ENCODE measurements at regions of chr16 and their contacts with region 1.

Region 1: GRCh38 chr16:79316004-79316458 is 284.5 kb downstream of the MAF start:
- DNase-seq: peak; percentile 85
- ATAC-seq: peak; percentile 89
- H3K4me3 Mint-ChIP-seq: no peak overlapping the region
- H3K27ac Mint-ChIP-seq: peak overlapping the region; percentile 88
- H3K4me1 Mint-ChIP-seq: peaks cover 28% of the 10 kb centered on the region
- H3K27me3 Mint-ChIP-seq: peaks cover 15% of the 10 kb centered on the region

Region 2: GRCh38 chr16:78778101-78779004 is 537.7 kb before region 1 on chr16:
- CTCF ChIA-PET with region 1: no interaction called
- POLR2A ChIA-PET with region 1: interaction called, 3 read pairs
- intact Hi-C with region 1: loop called (anchors 1 to 10 kb)
- DNase-seq: peak; percentile 77
- ATAC-seq: peak; percentile 66
- H3K4me3 Mint-ChIP-seq: peak overlapping the region; percentile 41
- H3K27ac Mint-ChIP-seq: peak overlapping the region; percentile 94
- H3K4me1 Mint-ChIP-seq: peaks cover 70% of the 10 kb centered on the region
- H3K27me3 Mint-ChIP-seq: no peaks in the 10 kb centered on the region

Region 3: GRCh38 chr16:78962457-78962929 is 353.5 kb before region 1 on chr16:
- CTCF ChIA-PET with region 1: no interaction called
- POLR2A ChIA-PET with region 1: no interaction called
- intact Hi-C with region 1: loop called in 1 of 2 experiments (anchors 1 kb)
- DNase-seq: no peak
- ATAC-seq: peak; percentile 86
- H3K4me3 Mint-ChIP-seq: no peak overlapping the region
- H3K27ac Mint-ChIP-seq: peak overlapping the region; percentile 86
- H3K4me1 Mint-ChIP-seq: peaks cover 23% of the 10 kb centered on the region
- H3K27me3 Mint-ChIP-seq: no peaks in the 10 kb centered on the region

Region 4: GRCh38 chr16:79217375-79218011 is 98.5 kb before region 1 on chr16:
- CTCF ChIA-PET with region 1: no interaction called
- POLR2A ChIA-PET with region 1: no interaction called
- intact Hi-C with region 1: loop called in 1 of 2 experiments (anchors 5 kb)
- DNase-seq: peak; percentile 46
- ATAC-seq: peak; percentile 82
- H3K4me3 Mint-ChIP-seq: no peak overlapping the region
- H3K27ac Mint-ChIP-seq: peak overlapping the region; percentile 34
- H3K4me1 Mint-ChIP-seq: peaks cover 13% of the 10 kb centered on the region
- H3K27me3 Mint-ChIP-seq: peaks cover 5% of the 10 kb centered on the region

Region 5: GRCh38 chr16:79451196-79451816 is 135.3 kb after region 1 on chr16:
- CTCF ChIA-PET with region 1: no interaction called
- POLR2A ChIA-PET with region 1: no interaction called
- intact Hi-C with region 1: loop called in 1 of 2 experiments (anchors 5 kb)
- DNase-seq: no peak
- ATAC-seq: peak; percentile 69
- H3K4me3 Mint-ChIP-seq: no peak overlapping the region
- H3K27ac Mint-ChIP-seq: no peak overlapping the region
- H3K4me1 Mint-ChIP-seq: peaks cover 10% of the 10 kb centered on the region
- H3K27me3 Mint-ChIP-seq: no peaks in the 10 kb centered on the region

Region 6: GRCh38 chr16:80197741-80198201 is 881.7 kb after region 1 on chr16:
- CTCF ChIA-PET with region 1: no interaction called
- POLR2A ChIA-PET with region 1: no interaction called
- intact Hi-C with region 1: loop called in 1 of 2 experiments (anchors 10 kb)
- DNase-seq: peak; percentile 10
- ATAC-seq: peak; percentile 94
- H3K4me3 Mint-ChIP-seq: no peak overlapping the region
- H3K27ac Mint-ChIP-seq: peak overlapping the region; percentile 34
- H3K4me1 Mint-ChIP-seq: peaks cover 14% of the 10 kb centered on the region
- H3K27me3 Mint-ChIP-seq: peaks cover 31% of the 10 kb centered on the region

Measured in activated CD4-positive, alpha-beta T cell treated with anti-CD3 and anti-CD28 coated beads for 36 hours (primary cell).